Uterus (tissue), 4 donors: ENCODE measurements at regions of chr2 and their contacts with region 1.

Region 1: GRCh38 chr2:46812361-46813024 is 103.1 kb downstream of the MCFD2 start:
- DNase-seq: peak; percentile 87 to 93
- H3K4me3 ChIP-seq: no peak overlapping the region
- H3K27ac ChIP-seq: peak overlapping the region; percentile 89 to 90
- H3K4me1 ChIP-seq: peaks cover 21 to 28% of the 10 kb centered on the region in 2 donors
- H3K27me3 ChIP-seq: no peaks in the 10 kb centered on the region
- CTCF ChIP-seq: no peak
- POLR2A ChIP-seq: no peak

Region 2: DNA sequence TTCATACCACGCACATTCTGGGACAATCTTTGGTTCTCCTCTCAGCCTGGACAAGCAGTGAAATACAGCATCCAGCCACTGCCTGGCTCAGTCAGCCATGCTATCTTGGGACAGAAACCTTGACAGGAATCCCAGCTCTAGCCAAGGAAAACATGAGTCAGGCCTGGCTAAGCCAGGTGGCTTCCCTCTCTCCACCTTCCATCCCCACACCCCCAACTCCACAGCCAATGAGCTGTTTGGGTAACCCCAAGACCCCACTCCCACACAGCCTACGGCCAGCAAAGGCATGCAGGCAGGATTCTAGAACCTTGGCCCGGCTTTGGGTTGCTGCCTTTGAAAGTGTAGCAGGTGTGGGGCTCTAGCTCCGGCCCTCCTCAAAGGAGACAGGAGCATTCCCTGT is 38.3 kb after region 1 on chr2:
- intact Hi-C with region 1: loop called (anchors 5 kb)
- DNase-seq: peak; percentile 90 to 93
- H3K4me3 ChIP-seq: no peak overlapping the region
- H3K27ac ChIP-seq: peak overlapping the region; percentile 90 to 93
- H3K4me1 ChIP-seq: peaks cover 40 to 52% of the 10 kb centered on the region in 2 donors
- H3K27me3 ChIP-seq: no peaks in the 10 kb centered on the region
- CTCF ChIP-seq: peak in 1 of 4 experiments; percentile 30
- POLR2A ChIP-seq: no peak